CD8-positive, alpha-beta T cell (primary cell): ENCODE measurements at regions of chr19 and their contacts with region 1.

Region 1: GRCh38 chr19:39445265-39446111 is at the start of gene SUPT5H:
- DNase-seq: peak; percentile 94 to 100 (median 97)
- ATAC-seq: peak; percentile 93
- H3K4me3 ChIP-seq: peak within 1 kb of the TSS; percentile 85 to 95
- H3K4me3 Mint-ChIP-seq: peak within 1 kb of the TSS; percentile 93
- H3K27ac ChIP-seq: peak within 1 kb of the TSS; percentile 94 to 95
- H3K27ac Mint-ChIP-seq: peak within 1 kb of the TSS; percentile 99
- H3K4me1 ChIP-seq: peaks cover 42% of the 10 kb centered on the region
- H3K4me1 Mint-ChIP-seq: peaks cover 54% of the 10 kb centered on the region
- H3K27me3 ChIP-seq: no peaks in the 10 kb centered on the region
- H3K27me3 Mint-ChIP-seq: no peaks in the 10 kb centered on the region
- CTCF ChIP-seq: no peak
- total RNA-seq, gene SUPT5H: 303 to 329 TPM

Region 2: DNA sequence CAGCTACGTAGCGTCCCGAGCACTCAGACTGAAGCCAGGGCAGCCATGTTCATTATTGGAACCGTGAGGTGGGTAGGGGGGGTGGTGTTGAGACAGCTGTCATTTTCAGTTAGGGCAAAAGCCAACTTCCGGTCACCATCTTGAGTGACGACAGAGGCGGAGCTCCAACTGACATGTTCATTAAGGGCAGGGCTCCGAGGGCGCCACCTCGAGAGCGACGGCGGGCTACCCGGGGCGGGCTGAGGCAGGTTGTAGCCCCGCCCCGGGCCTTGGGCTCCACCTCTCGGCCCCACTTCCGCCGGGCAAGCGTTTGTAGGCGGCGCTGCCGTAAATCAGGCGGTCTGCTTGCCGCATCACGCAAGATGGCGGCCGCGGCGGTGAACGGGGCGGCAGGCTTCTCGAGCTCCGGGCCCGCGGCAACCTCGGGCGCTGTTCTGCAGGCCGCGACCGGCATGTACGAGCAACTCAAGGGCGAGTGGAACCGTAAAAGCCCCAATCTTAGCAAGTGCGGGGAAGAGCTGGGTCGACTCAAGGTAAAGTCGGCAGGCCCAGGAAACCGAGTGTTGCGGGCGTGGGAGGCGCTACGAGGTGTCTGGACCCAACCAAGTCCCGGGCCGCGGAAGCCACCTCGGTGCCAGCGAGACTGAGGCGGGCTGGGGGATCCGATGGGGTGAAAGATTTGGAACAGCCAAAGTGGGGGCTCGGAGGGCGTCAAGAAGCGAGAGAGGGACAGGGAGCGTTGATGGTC is 1070.9 kb before region 1 on chr19 and contains the start of gene PSMD8:
- CTCF ChIA-PET with region 1: no interaction called
- POLR2A ChIA-PET with region 1: no interaction called
- intact Hi-C with region 1: loop called (anchors 10 kb)
- DNase-seq: peak; percentile 95 to 100 (median 98)
- ATAC-seq: peak; percentile 97
- H3K4me3 ChIP-seq: peak within 1 kb of the TSS; percentile 71 to 84
- H3K4me3 Mint-ChIP-seq: peak within 1 kb of the TSS; percentile 99
- H3K27ac ChIP-seq: peak within 1 kb of the TSS; percentile 83 to 89
- H3K27ac Mint-ChIP-seq: peak within 1 kb of the TSS; percentile 96
- H3K4me1 ChIP-seq: peaks cover 19% of the 10 kb centered on the region
- H3K4me1 Mint-ChIP-seq: peaks cover 29% of the 10 kb centered on the region
- H3K27me3 ChIP-seq: no peaks in the 10 kb centered on the region
- H3K27me3 Mint-ChIP-seq: peaks cover 3% of the 10 kb centered on the region
- CTCF ChIP-seq: no peak
- total RNA-seq, gene PSMD8: 71.5 to 75.1 TPM

Region 3: GRCh38 chr19:39390755-39391592 is 54.5 kb before region 1 on chr19 and contains the starts of genes MED29 and PAF1:
- CTCF ChIA-PET with region 1: no interaction called
- POLR2A ChIA-PET with region 1: interaction called, 12 read pairs
- intact Hi-C with region 1: loop called (anchors 1 kb)
- DNase-seq: peak; percentile 89 to 100 (median 94)
- ATAC-seq: peak; percentile 87
- H3K4me3 ChIP-seq: peak within 1 kb of the TSS; percentile 86 to 95
- H3K4me3 Mint-ChIP-seq: peak within 1 kb of the TSS; percentile 96
- H3K27ac ChIP-seq: peak within 1 kb of the TSS; percentile 99
- H3K27ac Mint-ChIP-seq: peak within 1 kb of the TSS; percentile 100
- H3K4me1 ChIP-seq: peaks cover 19% of the 10 kb centered on the region
- H3K4me1 Mint-ChIP-seq: peaks cover 37% of the 10 kb centered on the region
- H3K27me3 ChIP-seq: no peaks in the 10 kb centered on the region
- H3K27me3 Mint-ChIP-seq: no peaks in the 10 kb centered on the region
- CTCF ChIP-seq: no peak
- total RNA-seq, gene MED29: 45.9 to 55.1 TPM
- total RNA-seq, gene PAF1: 109 to 117 TPM

Region 4: GRCh38 chr19:39419003-39419402 is 26.5 kb before region 1 on chr19:
- CTCF ChIA-PET with region 1: no interaction called
- POLR2A ChIA-PET with region 1: no interaction called
- intact Hi-C with region 1: no loop called
- DNase-seq: no peak
- ATAC-seq: no peak
- H3K4me3 ChIP-seq: no peak overlapping the region
- H3K4me3 Mint-ChIP-seq: no peak overlapping the region
- H3K27ac ChIP-seq: no peak overlapping the region
- H3K27ac Mint-ChIP-seq: no peak overlapping the region
- H3K4me1 ChIP-seq: no peaks in the 10 kb centered on the region
- H3K4me1 Mint-ChIP-seq: peaks cover 7% of the 10 kb centered on the region
- H3K27me3 ChIP-seq: no peaks in the 10 kb centered on the region
- H3K27me3 Mint-ChIP-seq: no peaks in the 10 kb centered on the region
- CTCF ChIP-seq: no peak

Region 5: GRCh38 chr19:39474139-39474622 is 28.7 kb after region 1 on chr19:
- CTCF ChIA-PET with region 1: interaction called, 10 read pairs
- POLR2A ChIA-PET with region 1: no interaction called
- intact Hi-C with region 1: no loop called
- DNase-seq: peak; percentile 43 to 81 (median 75)
- ATAC-seq: peak; percentile 81
- H3K4me3 ChIP-seq: no peak overlapping the region
- H3K4me3 Mint-ChIP-seq: no peak overlapping the region
- H3K27ac ChIP-seq: no peak overlapping the region
- H3K27ac Mint-ChIP-seq: no peak overlapping the region
- H3K4me1 ChIP-seq: no peaks in the 10 kb centered on the region
- H3K4me1 Mint-ChIP-seq: no peaks in the 10 kb centered on the region
- H3K27me3 ChIP-seq: no peaks in the 10 kb centered on the region
- H3K27me3 Mint-ChIP-seq: no peaks in the 10 kb centered on the region
- CTCF ChIP-seq: peak; percentile 56

Region 6: DNA sequence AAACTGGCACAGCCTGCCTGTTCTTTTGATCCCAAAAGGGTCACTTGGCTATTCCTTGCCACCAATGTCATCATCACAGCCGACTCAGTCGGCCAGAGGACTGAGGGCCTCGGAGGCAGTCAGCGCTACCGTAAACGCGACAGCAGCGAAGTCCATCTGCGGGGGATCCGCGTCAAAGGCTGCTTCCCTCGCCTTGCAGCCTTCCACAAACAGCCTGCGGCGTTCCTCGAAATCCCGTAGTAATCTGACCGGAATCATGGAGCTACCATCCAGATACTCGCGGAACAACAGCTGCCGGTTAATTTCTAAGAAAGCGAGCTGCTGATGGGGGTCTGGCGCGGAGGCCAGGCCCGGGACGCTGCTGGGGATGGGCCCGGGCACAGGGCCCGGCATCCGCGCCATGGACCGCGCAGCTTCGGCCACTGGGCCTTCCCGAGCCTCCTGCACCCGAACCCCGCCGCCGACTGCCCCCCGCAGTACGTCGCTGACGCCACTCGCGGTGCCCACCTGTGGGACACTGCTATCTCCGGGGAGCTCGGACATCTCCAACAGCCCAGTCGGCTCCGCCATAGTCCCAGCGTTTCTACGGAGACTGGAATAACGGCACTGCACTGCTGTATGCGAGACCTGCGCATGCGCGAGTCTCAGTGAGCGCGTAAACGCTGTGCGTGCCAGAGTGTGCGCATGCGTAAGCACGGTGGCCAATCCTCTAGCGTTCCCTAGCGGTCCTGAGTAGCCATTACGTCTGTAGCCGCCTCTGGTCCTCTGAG is 86.9 kb after region 1 on chr19 and contains the start of gene EID2B:
- CTCF ChIA-PET with region 1: interaction called, 26 read pairs
- POLR2A ChIA-PET with region 1: interaction called, 10 read pairs
- intact Hi-C with region 1: loop called (anchors 1 kb)
- DNase-seq: peak; percentile 83 to 98 (median 96)
- ATAC-seq: peak; percentile 98
- H3K4me3 ChIP-seq: peak within 1 kb of the TSS; percentile 77 to 93
- H3K4me3 Mint-ChIP-seq: peak within 1 kb of the TSS; percentile 93
- H3K27ac ChIP-seq: peak within 1 kb of the TSS; percentile 69 to 80
- H3K27ac Mint-ChIP-seq: peak within 1 kb of the TSS; percentile 87
- H3K4me1 ChIP-seq: peaks cover 9% of the 10 kb centered on the region
- H3K4me1 Mint-ChIP-seq: peaks cover 31% of the 10 kb centered on the region
- H3K27me3 ChIP-seq: no peaks in the 10 kb centered on the region
- H3K27me3 Mint-ChIP-seq: no peaks in the 10 kb centered on the region
- CTCF ChIP-seq: peak; percentile 99
- total RNA-seq, gene EID2B: 3.5 to 3.7 TPM

Region 7: DNA sequence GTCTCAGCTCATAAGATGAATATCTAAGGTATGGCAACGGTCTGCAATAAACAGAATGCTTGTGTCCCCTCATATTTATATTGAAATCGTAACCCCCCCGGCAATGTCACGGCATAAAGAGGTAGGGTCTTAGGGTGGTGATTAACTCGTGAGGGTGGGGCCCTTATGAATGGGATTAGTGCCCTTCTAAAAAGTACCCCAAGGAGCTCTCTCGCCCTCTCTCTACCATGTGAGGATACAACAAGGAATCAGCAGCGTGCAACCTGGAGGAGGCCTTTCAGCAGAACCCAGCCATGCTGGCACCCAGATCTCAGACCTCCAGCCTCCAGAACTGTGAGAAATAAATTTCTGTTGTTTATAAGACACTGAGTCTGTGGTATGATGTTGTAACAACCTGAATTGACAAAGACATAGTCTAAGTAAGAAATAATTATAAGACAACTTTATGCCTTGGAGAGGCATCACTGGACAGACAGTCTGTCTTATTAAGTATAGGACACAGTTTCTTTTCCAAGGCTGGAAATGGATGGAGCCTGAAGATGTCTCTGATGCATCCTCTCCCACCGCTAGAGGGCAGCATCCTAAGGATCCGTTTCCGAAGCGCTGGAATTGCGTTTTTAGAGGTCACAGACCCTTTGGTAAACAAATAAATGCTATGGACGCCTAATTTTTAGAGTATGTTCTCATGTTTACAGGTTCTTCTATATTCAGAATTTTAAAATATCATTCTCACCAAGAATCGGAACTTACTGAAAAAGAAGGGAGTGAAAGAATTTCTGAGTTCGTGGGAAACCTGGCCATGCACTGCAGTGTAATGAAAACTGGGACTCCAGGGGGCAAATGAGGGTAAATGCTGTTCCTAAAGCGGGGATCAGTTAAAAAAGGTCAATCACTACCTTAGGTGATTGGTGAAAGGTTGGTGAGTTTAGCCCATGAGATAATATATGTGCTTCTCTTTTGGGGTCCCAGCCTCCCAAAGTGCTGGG is 319.9 kb after region 1 on chr19:
- CTCF ChIA-PET with region 1: interaction called, 3 read pairs
- POLR2A ChIA-PET with region 1: no interaction called
- intact Hi-C with region 1: loop called in 1 of 2 experiments (anchors 5 kb)
- DNase-seq: peak in 8 of 9 experiments; percentile 7 to 65 (median 49)
- ATAC-seq: no peak
- H3K4me3 ChIP-seq: no peak overlapping the region
- H3K4me3 Mint-ChIP-seq: no peak overlapping the region
- H3K27ac ChIP-seq: no peak overlapping the region
- H3K27ac Mint-ChIP-seq: no peak overlapping the region
- H3K4me1 ChIP-seq: no peaks in the 10 kb centered on the region
- H3K4me1 Mint-ChIP-seq: no peaks in the 10 kb centered on the region
- H3K27me3 ChIP-seq: no peaks in the 10 kb centered on the region
- H3K27me3 Mint-ChIP-seq: peaks cover 13% of the 10 kb centered on the region
- CTCF ChIP-seq: peak; percentile 73

Region 8: GRCh38 chr19:39915101-39915847 is 469.8 kb after region 1 on chr19:
- CTCF ChIA-PET with region 1: no interaction called
- POLR2A ChIA-PET with region 1: no interaction called
- intact Hi-C with region 1: no loop called
- DNase-seq: no peak
- ATAC-seq: no peak
- H3K4me3 ChIP-seq: no peak overlapping the region
- H3K4me3 Mint-ChIP-seq: no peak overlapping the region
- H3K27ac ChIP-seq: no peak overlapping the region
- H3K27ac Mint-ChIP-seq: no peak overlapping the region
- H3K4me1 ChIP-seq: no peaks in the 10 kb centered on the region
- H3K4me1 Mint-ChIP-seq: peaks cover 24% of the 10 kb centered on the region
- H3K27me3 ChIP-seq: no peaks in the 10 kb centered on the region
- H3K27me3 Mint-ChIP-seq: no peaks in the 10 kb centered on the region
- CTCF ChIP-seq: no peak

Region 9: DNA sequence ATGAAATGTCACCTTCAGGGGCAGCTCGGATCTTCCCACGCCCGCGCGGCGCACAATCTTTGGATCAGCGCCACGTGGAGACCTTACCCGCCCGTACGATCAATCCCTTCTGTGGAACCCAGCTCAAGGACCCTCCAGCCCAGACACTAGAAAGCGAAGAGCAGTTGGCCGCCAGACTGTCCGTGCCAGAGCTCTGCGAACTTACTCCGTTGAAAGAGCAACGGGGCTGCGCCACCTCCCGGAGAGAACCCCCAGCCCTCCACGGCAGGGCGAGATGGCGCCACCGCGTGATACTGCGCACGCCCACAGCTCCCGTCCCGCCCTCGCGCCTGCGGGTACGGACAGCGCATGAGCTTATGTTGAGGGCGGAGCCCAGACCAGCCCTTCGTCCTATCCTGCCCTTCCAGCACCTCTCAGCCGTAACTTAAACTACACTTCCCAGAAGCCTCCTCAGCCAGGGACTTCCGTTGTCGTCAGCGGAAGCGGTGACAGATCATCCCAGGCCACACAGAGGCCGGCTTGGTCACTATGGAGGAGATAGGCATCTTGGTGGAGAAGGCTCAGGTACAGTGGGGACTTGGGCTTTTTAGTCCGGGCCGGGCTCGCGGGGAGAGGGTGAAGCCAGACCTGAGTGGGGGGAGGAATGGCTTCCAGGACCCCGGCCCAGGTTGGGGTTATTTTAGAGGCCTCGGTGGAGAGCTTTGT is 525.3 kb after region 1 on chr19 and contains the start of gene PSMC4:
- CTCF ChIA-PET with region 1: no interaction called
- POLR2A ChIA-PET with region 1: no interaction called
- intact Hi-C with region 1: loop called in 1 of 2 experiments (anchors 10 kb)
- DNase-seq: peak; percentile 97 to 100 (median 98)
- ATAC-seq: peak; percentile 98
- H3K4me3 ChIP-seq: peak within 1 kb of the TSS; percentile 85 to 87
- H3K4me3 Mint-ChIP-seq: peak within 1 kb of the TSS; percentile 99
- H3K27ac ChIP-seq: peak within 1 kb of the TSS; percentile 94 to 96
- H3K27ac Mint-ChIP-seq: peak within 1 kb of the TSS; percentile 99
- H3K4me1 ChIP-seq: peaks cover 31% of the 10 kb centered on the region
- H3K4me1 Mint-ChIP-seq: peaks cover 51% of the 10 kb centered on the region
- H3K27me3 ChIP-seq: no peaks in the 10 kb centered on the region
- H3K27me3 Mint-ChIP-seq: no peaks in the 10 kb centered on the region
- CTCF ChIP-seq: peak; percentile 82
- total RNA-seq, gene PSMC4: 75.9 to 79.0 TPM